ENCODE measurements at regions of chr9 and their contacts with region 1.

Region 1: DNA sequence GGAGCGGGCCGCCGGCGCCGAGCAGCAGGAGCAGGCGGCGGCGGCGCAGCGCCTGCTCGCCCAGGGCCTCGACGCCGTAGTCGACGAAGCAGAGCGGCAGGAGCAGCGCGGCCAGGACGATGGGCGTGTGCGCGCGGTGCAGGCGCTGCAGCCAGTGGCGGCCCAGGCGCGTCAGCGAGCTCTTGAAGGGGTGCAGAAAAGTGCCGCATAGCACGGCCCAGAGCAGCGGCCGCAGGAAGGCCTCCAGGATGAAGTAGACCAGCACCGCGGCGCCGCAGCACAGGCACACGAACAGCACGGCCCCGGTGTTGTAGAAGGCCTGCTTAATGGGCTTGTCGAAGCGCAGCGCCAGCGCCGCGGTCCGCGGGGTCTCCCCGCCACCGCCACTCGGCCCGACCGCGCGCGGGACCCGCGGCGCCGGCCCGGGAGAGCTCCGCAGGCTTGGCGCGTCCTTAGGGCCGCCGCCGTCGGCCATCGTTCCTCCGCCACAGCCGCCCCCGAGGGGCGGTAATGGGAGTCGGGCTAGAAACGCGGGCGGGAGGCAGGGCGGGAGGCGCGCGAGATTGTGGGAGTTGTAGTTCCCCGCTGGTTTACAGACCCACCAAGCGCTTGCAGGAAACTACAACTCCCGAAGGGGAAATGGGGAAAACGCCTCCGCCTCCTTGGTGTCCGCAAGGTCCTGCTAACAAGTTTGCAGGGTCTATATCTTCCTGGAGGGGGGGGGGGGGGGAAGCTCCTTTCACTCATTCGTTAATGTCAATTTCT is at the start of gene TMEM245:
- DNase-seq: peak; percentile 96 to 99
- H3K4me3 ChIP-seq: peak within 1 kb of the TSS; percentile 86
- H3K4me3 Mint-ChIP-seq: peak within 1 kb of the TSS; percentile 95
- H3K27ac Mint-ChIP-seq: peak within 1 kb of the TSS; percentile 85
- H3K4me1 ChIP-seq: peaks cover 45% of the 10 kb centered on the region
- H3K4me1 Mint-ChIP-seq: peaks cover 42% of the 10 kb centered on the region
- H3K27me3 ChIP-seq: no peaks in the 10 kb centered on the region
- H3K27me3 Mint-ChIP-seq: no peaks in the 10 kb centered on the region
- CTCF ChIP-seq: no peak
- total RNA-seq, gene TMEM245: 99.2 and 110 TPM in 2 replicates

Region 2: GRCh38 chr9:108621991-108622855 is 497.4 kb before region 1 on chr9:
- CTCF ChIA-PET with region 1: no interaction called
- POLR2A ChIA-PET with region 1: no interaction called
- intact Hi-C with region 1: no loop called
- DNase-seq: no peak
- H3K4me3 ChIP-seq: no peak overlapping the region
- H3K4me3 Mint-ChIP-seq: no peak overlapping the region
- H3K27ac Mint-ChIP-seq: no peak overlapping the region
- H3K4me1 ChIP-seq: no peaks in the 10 kb centered on the region
- H3K4me1 Mint-ChIP-seq: peaks cover 4% of the 10 kb centered on the region
- H3K27me3 ChIP-seq: no peaks in the 10 kb centered on the region
- H3K27me3 Mint-ChIP-seq: peaks cover 3% of the 10 kb centered on the region
- CTCF ChIP-seq: no peak

Region 3: GRCh38 chr9:108894225-108894997 is 225.2 kb before region 1 on chr9:
- CTCF ChIA-PET with region 1: no interaction called
- POLR2A ChIA-PET with region 1: no interaction called
- intact Hi-C with region 1: no loop called
- DNase-seq: peak in 1 of 2 experiments; percentile 11
- H3K4me3 ChIP-seq: no peak overlapping the region
- H3K4me3 Mint-ChIP-seq: no peak overlapping the region
- H3K27ac Mint-ChIP-seq: no peak overlapping the region
- H3K4me1 ChIP-seq: no peaks in the 10 kb centered on the region
- H3K4me1 Mint-ChIP-seq: no peaks in the 10 kb centered on the region
- H3K27me3 ChIP-seq: no peaks in the 10 kb centered on the region
- H3K27me3 Mint-ChIP-seq: no peaks in the 10 kb centered on the region
- CTCF ChIP-seq: no peak

Region 4: DNA sequence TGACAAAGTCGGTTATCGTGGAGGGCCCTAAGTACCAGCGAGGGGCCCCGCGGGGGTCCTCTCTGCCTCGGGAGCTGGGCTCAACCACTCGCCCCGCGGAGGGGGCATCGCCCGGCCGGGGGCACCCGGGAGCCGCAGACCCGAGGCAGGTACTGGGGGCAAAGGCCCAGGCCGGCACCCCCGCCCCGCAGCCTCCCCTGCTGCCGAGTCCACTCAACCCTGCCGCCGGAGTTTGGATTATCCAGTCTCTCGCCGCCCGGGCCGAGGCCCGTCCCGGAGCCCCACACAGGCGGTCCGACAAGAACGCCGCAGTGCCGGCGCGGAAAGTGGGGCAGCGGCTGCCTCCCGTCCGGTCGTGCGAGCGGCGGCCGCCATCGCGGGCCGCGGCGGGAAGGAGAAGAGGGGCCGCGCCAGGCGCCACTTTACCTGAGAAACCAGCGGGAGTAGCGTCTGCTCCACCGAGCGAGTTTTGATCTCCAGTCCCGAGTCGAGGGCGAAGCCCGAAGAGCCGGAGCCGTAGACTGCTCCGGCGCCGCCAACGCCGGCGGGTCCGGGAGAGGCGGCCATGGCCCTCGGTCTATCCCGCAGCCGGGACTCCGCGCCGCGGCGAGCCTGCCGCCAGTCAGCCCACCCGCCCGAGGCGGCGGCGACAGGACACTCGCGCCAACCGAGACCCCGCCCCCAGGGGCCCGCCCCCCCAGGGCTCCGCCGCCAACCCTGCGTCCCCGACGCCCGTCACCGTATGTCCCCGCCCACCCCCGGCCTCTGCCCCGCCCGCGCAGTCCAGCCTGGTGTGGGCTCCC is 106.5 kb before region 1 on chr9 and contains the start of gene CTNNAL1:
- CTCF ChIA-PET with region 1: no interaction called
- POLR2A ChIA-PET with region 1: no interaction called
- intact Hi-C with region 1: loop called (anchors 1 kb)
- DNase-seq: peak; percentile 97
- H3K4me3 ChIP-seq: peak within 1 kb of the TSS; percentile 73
- H3K4me3 Mint-ChIP-seq: peak within 1 kb of the TSS; percentile 94
- H3K27ac Mint-ChIP-seq: peak within 1 kb of the TSS; percentile 77
- H3K4me1 ChIP-seq: peaks cover 48% of the 10 kb centered on the region
- H3K4me1 Mint-ChIP-seq: peaks cover 20% of the 10 kb centered on the region
- H3K27me3 ChIP-seq: no peaks in the 10 kb centered on the region
- H3K27me3 Mint-ChIP-seq: no peaks in the 10 kb centered on the region
- CTCF ChIP-seq: no peak
- total RNA-seq, gene CTNNAL1: 107 and 111 TPM in 2 replicates

Region 5: GRCh38 chr9:109063760-109064159 is 55.9 kb before region 1 on chr9:
- CTCF ChIA-PET with region 1: no interaction called
- POLR2A ChIA-PET with region 1: no interaction called
- intact Hi-C with region 1: loop called (anchors 2 kb)
- DNase-seq: no peak
- H3K4me3 ChIP-seq: no peak overlapping the region
- H3K4me3 Mint-ChIP-seq: peak overlapping the region; percentile 1
- H3K27ac Mint-ChIP-seq: peak overlapping the region; percentile 46
- H3K4me1 ChIP-seq: peaks cover 49% of the 10 kb centered on the region
- H3K4me1 Mint-ChIP-seq: peaks cover 19% of the 10 kb centered on the region
- H3K27me3 ChIP-seq: no peaks in the 10 kb centered on the region
- H3K27me3 Mint-ChIP-seq: no peaks in the 10 kb centered on the region
- CTCF ChIP-seq: no peak

Region 6: GRCh38 chr9:109083813-109084405 is 35.7 kb before region 1 on chr9:
- CTCF ChIA-PET with region 1: interaction called, 3 read pairs
- POLR2A ChIA-PET with region 1: interaction called, 3 read pairs
- intact Hi-C with region 1: loop called (anchors 2 kb)
- DNase-seq: no peak
- H3K4me3 ChIP-seq: no peak overlapping the region
- H3K4me3 Mint-ChIP-seq: no peak overlapping the region
- H3K27ac Mint-ChIP-seq: no peak overlapping the region
- H3K4me1 ChIP-seq: peaks cover 91% of the 10 kb centered on the region
- H3K4me1 Mint-ChIP-seq: peaks cover 56% of the 10 kb centered on the region
- H3K27me3 ChIP-seq: no peaks in the 10 kb centered on the region
- H3K27me3 Mint-ChIP-seq: no peaks in the 10 kb centered on the region
- CTCF ChIP-seq: no peak

Region 7: DNA sequence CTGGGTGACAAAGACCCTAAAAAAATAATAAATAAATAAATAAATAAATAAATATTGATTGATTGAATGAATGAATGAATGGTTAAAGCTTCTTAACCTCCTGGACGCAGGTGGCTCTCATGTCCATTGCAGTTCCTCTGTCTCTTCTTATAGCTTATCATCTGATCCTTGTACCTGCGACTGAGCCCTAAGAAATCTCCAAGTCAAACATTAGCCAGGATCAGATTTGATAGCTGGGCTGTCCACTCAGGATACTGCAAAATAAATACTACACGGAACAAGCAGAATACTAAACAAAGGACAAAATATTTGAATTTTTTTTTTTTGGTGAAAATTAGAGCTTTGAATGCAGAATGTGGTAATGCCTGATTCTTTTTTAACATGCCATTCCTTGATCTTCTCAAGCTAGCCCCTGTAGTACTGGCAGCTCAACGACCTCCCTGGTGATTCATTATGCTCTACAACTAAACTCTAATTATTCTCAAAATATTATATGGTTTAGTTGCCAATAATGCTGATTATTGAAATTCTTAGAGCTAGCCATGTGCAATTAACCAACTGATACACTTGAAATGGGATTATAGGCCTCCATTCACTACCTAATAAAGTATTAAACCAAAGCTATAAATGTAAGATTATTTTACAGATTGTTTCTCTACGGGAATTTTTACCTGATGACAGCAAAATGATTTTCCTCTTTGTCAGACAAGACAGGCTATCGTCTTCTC is 10.0 kb after region 1 on chr9:
- CTCF ChIA-PET with region 1: no interaction called
- POLR2A ChIA-PET with region 1: no interaction called
- intact Hi-C with region 1: loop called (anchors 1 kb)
- DNase-seq: peak in 1 of 2 experiments; percentile 34
- H3K4me3 ChIP-seq: no peak overlapping the region
- H3K4me3 Mint-ChIP-seq: no peak overlapping the region
- H3K27ac Mint-ChIP-seq: no peak overlapping the region
- H3K4me1 ChIP-seq: peaks cover 54% of the 10 kb centered on the region
- H3K4me1 Mint-ChIP-seq: peaks cover 18% of the 10 kb centered on the region
- H3K27me3 ChIP-seq: no peaks in the 10 kb centered on the region
- H3K27me3 Mint-ChIP-seq: no peaks in the 10 kb centered on the region
- CTCF ChIP-seq: no peak

Region 8: GRCh38 chr9:110007477-110008270 is 888.1 kb after region 1 on chr9:
- CTCF ChIA-PET with region 1: no interaction called
- POLR2A ChIA-PET with region 1: no interaction called
- intact Hi-C with region 1: no loop called
- DNase-seq: no peak
- H3K4me3 ChIP-seq: no peak overlapping the region
- H3K4me3 Mint-ChIP-seq: no peak overlapping the region
- H3K27ac Mint-ChIP-seq: no peak overlapping the region
- H3K4me1 ChIP-seq: peaks cover 22% of the 10 kb centered on the region
- H3K4me1 Mint-ChIP-seq: peaks cover 16% of the 10 kb centered on the region
- H3K27me3 ChIP-seq: no peaks in the 10 kb centered on the region
- H3K27me3 Mint-ChIP-seq: no peaks in the 10 kb centered on the region
- CTCF ChIP-seq: no peak

Measured in Caco-2 (cell line).